ENCODE measurements at regions of chr17 and their contacts with region 1.

Region 1: DNA sequence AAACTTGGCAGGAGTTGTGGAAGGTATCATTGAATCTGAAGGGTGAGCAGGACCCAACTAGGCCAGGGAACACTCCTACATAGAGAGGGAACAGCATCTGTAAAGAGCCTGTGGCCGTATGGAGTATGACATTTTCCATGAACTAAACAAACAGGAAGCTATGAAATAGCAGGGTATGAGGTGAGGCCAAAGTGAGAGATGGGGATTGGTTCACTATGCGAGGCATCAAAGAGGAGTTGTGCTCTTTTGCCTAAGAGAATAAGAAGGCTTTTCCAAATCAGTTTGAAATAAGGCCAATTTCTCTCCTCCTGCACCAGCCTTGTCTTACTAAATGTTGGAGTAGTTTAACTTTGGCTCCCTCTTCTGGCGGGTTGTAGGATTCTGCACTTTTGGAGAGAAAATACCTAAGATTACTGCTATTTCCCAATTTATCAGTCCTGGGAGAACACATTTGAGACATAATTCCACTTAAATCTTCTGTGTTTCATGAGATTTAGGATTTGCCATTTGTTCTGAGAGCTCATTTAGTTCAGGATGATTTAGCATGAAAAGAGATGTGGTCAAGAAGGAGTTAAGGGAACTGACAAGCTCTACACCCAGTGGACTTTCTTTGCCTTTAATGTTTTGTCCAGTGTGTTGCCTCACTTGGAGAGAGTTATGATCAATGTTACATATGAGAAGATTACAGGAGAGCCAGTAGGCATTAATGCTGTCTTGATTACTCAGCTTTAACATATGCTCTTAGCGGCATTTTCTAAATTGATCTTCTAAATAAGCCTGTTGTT is 55.4 kb downstream of the TNRC6C start:
- DNase-seq: peak; percentile 71
- H3K4me3 ChIP-seq: no peak overlapping the region
- H3K27ac ChIP-seq: peak overlapping the region in 1 of 2 experiments; percentile 50; a peak in 2 of 4 replicates
- H3K4me1 ChIP-seq: peaks cover 0 to 8% of the 10 kb centered on the region in 2 experiments; a peak in 1 of 4 replicates
- H3K27me3 ChIP-seq: no peaks in the 10 kb centered on the region
- CTCF ChIP-seq: peak; percentile 99
- EP300 ChIP-seq: no peak
- RAD21 ChIP-seq: peak; percentile 97

Region 2: GRCh38 chr17:77537566-77537965 is 476.3 kb before region 1 on chr17:
- CTCF ChIA-PET with region 1: interaction called, 246 read pairs
- POLR2A ChIA-PET with region 1: interaction called, 11 read pairs
- DNase-seq: no peak
- H3K4me3 ChIP-seq: no peak overlapping the region
- H3K27ac ChIP-seq: no peak overlapping the region
- H3K4me1 ChIP-seq: peaks cover 0 to 6% of the 10 kb centered on the region in 2 experiments; a peak in 2 of 4 replicates
- H3K27me3 ChIP-seq: peaks cover 42% of the 10 kb centered on the region; the same call in 1 of the 2 replicates
- CTCF ChIP-seq: no peak
- EP300 ChIP-seq: no peak
- RAD21 ChIP-seq: no peak

Region 3: DNA sequence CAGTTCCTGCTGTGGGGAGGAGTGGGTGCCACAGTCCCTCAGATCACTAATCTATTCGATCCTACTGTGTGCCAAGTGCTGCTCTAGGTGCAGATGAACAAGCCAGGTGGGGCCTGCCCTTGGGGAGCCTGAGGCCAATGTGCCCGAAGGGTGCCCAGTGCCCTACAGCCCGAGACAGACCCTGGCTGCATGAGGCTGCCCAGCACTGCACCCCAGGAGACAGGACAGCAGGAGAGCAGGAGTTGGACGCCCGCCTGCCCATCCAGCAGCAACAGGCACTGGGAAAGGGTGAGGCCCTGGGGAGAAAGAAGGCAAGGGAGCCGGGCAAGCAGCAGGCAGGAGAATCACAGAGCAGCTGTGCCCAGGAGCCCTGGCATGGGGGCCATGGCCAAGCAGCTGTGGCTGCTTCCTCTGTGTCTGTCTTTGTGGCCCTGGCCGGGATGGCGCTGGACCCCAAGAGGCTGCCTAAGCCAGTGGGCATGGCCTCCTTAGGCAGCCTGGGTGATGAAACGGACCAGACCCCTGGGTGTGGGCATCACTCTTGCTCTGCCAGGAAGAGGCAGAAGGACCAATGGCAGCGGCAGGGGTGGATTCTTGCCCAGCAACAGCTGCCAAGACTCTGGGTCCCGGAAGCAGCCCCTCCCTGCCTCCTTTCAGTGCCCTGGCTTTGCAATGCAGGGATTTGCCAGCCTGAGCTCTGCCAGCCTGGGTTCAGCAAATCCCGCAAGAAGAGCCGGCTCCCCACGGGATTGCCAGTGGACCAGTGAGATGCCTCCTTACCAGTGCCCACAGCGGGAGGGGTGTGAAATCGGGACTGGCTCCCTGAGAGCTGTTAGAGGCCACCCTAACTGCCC is 235.0 kb before region 1 on chr17:
- CTCF ChIA-PET with region 1: interaction called, 15 read pairs
- POLR2A ChIA-PET with region 1: no interaction called
- DNase-seq: peak; percentile 96
- H3K4me3 ChIP-seq: no peak overlapping the region
- H3K27ac ChIP-seq: peak overlapping the region; percentile 56 to 98
- H3K4me1 ChIP-seq: peaks cover 17 to 52% of the 10 kb centered on the region in 2 experiments
- H3K27me3 ChIP-seq: 0 out of 2 replicates have a peak, but pooled peaks cover under 1% of the 10 kb centered on the region
- CTCF ChIP-seq: no peak
- EP300 ChIP-seq: peak in 1 of 2 experiments; percentile 84; a peak in 2 of 4 replicates
- RAD21 ChIP-seq: no peak

Region 4: DNA sequence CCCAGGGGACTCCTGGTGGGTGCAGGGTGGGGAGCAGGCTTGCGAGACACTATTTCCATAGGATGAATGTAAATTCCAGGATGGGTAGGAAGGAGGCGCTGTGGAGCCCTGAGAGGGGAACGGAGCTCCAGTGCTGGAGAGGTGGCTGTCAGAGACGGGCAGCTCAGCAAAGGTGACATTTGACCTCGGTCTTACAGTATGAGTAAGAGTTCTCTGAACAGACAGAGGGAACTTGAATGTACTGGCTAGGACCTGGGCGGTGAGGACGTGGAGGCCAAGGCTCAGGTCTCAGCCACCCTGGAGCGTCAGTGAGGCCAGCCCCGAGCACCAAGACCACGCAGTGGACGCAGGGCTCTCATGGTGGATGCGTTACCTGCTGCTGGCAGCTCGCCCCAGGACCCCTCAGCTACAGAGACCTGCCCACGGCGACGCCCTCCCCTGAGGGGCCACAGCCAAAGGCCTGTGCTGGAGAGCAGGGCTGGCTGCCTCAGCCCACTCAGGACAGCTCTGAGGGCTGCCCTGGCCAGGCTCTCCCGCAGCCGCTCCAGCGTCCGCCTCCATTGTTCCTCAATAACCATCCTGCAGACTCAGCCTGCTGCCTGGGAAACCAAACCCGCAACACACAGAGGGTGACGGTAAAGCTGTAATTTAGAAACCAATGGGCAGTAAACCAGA is 121.3 kb before region 1 on chr17:
- CTCF ChIA-PET with region 1: interaction called, 12 read pairs
- POLR2A ChIA-PET with region 1: no interaction called
- DNase-seq: peak; percentile 77
- H3K4me3 ChIP-seq: 0 out of 4 replicates have a peak overlapping the region, but pooled peaks of 1 of the 2 experiments have one; percentile 27
- H3K27ac ChIP-seq: no peak overlapping the region
- H3K4me1 ChIP-seq: peaks cover 0 to 3% of the 10 kb centered on the region in 2 experiments; a peak in 1 of 4 replicates
- H3K27me3 ChIP-seq: peaks cover 2% of the 10 kb centered on the region; the same call in 1 of the 2 replicates
- CTCF ChIP-seq: peak; percentile 55
- EP300 ChIP-seq: no peak
- RAD21 ChIP-seq: peak; percentile 40; the same call in 1 of the 2 replicates

Region 5: DNA sequence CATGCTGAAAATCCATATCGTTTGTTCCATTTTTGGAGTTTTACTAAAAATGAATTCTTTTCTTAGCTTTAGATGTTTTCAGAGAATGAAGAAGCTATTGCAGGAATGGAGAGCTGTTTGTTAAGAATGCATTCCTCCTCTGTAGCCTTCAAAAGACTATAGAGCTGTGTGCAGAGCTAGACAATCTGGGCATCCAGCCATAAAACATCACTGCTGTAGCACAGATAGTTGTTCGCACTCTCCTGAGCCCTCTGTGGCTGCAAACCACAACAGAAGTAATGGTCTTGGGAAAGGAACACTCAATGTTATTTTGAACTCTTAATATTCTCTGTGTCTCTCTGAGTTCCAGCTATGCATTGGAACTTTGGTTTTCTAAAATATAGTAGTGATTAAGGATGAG is 50.4 kb before region 1 on chr17:
- CTCF ChIA-PET with region 1: interaction called, 31 read pairs
- POLR2A ChIA-PET with region 1: interaction called, 9 read pairs
- DNase-seq: peak; percentile 77
- H3K4me3 ChIP-seq: no peak overlapping the region
- H3K27ac ChIP-seq: peak overlapping the region in 1 of 2 experiments; percentile 61; a peak in 2 of 4 replicates
- H3K4me1 ChIP-seq: peaks cover 0 to 55% of the 10 kb centered on the region in 2 experiments; a peak in 3 of 4 replicates
- H3K27me3 ChIP-seq: no peaks in the 10 kb centered on the region
- CTCF ChIP-seq: no peak
- EP300 ChIP-seq: peak in 1 of 2 experiments; percentile 21; a peak in 1 of 4 replicates
- RAD21 ChIP-seq: peak; percentile 53

Region 6: GRCh38 chr17:78032166-78032565 is 18.3 kb after region 1 on chr17:
- CTCF ChIA-PET with region 1: interaction called, 47 read pairs
- POLR2A ChIA-PET with region 1: no interaction called
- DNase-seq: no peak
- H3K4me3 ChIP-seq: no peak overlapping the region
- H3K27ac ChIP-seq: peak overlapping the region; percentile 23 to 75; a peak in 3 of 4 replicates
- H3K4me1 ChIP-seq: peaks cover 3 to 13% of the 10 kb centered on the region in 2 experiments
- H3K27me3 ChIP-seq: no peaks in the 10 kb centered on the region
- CTCF ChIP-seq: no peak
- EP300 ChIP-seq: no peak
- RAD21 ChIP-seq: no peak